MCF 10A (cell line): ENCODE measurements at regions of chr9 and their contacts with region 1.

Region 1: DNA sequence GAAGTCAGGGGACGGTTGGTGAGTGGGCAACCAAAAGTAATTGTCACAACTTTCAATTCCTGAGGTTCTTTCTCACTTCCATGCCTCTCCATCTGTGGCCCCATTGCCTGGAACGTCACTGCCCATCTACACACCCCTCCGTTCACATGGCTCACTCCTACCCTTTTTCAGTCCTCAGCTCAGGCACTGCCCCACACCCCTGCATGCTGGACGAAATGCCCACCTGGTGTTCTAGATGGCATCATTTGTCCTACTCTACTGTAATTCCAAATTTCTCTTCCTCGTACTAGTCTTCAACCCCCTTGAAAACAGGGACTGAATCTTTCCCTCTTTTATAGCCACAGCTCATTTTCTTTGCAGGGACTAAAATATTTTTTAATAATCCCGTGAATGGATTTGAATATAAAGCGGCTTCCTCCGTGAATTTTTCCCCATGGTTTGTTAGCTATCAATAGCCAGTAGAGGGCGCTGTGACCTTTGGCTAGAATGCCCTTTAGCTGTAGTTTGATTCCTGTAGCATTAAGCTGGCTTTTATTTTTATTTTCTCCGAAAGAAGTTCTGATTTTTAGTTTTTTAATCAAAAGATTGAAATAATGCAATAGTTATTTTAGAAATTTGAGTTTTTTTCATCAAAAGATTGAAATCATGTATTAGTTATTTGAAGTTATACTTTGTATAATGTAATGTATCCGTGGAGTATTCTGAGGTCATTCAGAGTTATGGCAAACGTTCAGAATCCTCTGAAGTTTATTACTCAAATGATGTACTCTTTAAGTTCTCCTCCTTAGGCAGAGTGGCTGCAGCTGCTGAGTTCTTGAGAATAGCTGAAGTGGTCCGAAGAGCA is 232.1 kb downstream of the SH3GL2 start:
- DNase-seq: peak; percentile 78
- H3K4me3 Mint-ChIP-seq: no peak overlapping the region
- H3K27ac Mint-ChIP-seq: no peak overlapping the region
- H3K4me1 Mint-ChIP-seq: no peaks in the 10 kb centered on the region
- H3K27me3 Mint-ChIP-seq: peaks cover 25% of the 10 kb centered on the region
- CTCF ChIP-seq: peak; percentile 66

Region 2: DNA sequence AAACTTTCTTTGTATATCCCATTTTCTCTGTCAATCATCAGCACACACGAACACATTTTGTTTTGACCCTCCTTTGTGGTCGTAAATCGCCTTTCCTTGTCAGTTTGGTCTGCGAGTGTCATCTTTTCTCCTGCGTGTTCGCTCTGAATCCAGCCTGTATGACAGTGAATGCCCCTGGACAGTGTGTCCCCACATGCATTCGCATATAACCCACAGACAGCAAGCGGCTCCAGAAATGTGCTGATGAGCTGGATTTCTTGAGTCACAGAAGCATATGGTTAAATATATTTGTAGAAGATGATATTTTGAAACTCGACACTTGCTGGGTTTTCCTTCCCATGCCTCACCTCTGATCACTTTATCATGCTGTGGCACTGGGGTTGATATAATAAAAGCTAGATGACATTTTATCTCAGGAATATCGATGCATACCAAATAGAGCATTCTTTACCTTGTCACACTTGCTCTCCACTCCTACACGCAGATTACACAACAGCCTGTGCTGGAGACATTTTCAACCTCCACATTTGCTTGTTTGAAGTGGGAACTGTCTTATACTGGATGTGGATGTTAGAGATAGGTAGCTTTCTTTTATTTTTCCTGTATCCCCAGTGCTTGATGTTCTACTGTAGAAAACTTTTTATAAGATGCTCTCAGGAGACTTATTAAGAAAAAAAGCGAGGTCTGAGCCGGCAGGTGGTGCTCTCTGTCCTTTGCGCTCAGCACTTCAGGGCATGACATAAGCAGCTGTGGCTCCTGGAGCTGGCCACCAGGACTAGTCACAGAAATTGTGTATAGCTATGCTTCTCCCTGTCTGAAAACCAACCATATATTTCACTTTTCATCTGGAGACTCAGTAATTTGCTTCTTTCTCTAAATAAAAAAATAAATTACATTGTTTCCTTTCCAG is 17.0 kb before region 1 on chr9:
- CTCF ChIA-PET with region 1: interaction called, 20 read pairs
- POLR2A ChIA-PET with region 1: no interaction called
- intact Hi-C with region 1: no loop called
- DNase-seq: peak; percentile 49
- H3K4me3 Mint-ChIP-seq: no peak overlapping the region
- H3K27ac Mint-ChIP-seq: no peak overlapping the region
- H3K4me1 Mint-ChIP-seq: no peaks in the 10 kb centered on the region
- H3K27me3 Mint-ChIP-seq: peaks cover 64% of the 10 kb centered on the region
- CTCF ChIP-seq: no peak

Region 3: DNA sequence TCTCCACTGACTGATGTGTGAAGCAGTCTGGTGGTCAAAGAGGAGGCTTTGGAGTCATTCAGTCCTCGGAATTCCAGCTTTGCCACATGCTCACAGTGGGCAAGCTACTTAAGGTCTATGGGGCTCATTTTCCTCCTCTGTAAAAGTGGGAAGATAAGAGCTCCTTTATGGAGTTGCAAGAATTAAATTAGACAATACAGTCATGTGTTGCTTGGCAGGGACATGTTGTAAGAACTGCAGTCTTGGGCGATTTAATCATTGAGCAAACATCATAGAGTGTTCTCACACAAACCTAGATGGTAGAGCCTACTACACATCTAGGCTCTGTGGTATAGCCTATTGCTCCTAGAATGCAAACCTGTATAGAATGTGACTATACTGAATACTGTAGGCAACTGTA is 21.9 kb after region 1 on chr9:
- CTCF ChIA-PET with region 1: interaction called, 23 read pairs
- POLR2A ChIA-PET with region 1: no interaction called
- intact Hi-C with region 1: no loop called
- DNase-seq: no peak
- H3K4me3 Mint-ChIP-seq: no peak overlapping the region
- H3K27ac Mint-ChIP-seq: no peak overlapping the region
- H3K4me1 Mint-ChIP-seq: no peaks in the 10 kb centered on the region
- H3K27me3 Mint-ChIP-seq: peaks cover 19% of the 10 kb centered on the region
- CTCF ChIP-seq: no peak

Region 4: GRCh38 chr9:17970277-17970676 is 159.3 kb after region 1 on chr9:
- CTCF ChIA-PET with region 1: no interaction called
- POLR2A ChIA-PET with region 1: no interaction called
- intact Hi-C with region 1: no loop called
- DNase-seq: no peak
- H3K4me3 Mint-ChIP-seq: no peak overlapping the region
- H3K27ac Mint-ChIP-seq: no peak overlapping the region
- H3K4me1 Mint-ChIP-seq: no peaks in the 10 kb centered on the region
- H3K27me3 Mint-ChIP-seq: peaks cover 14% of the 10 kb centered on the region
- CTCF ChIP-seq: no peak

Region 5: DNA sequence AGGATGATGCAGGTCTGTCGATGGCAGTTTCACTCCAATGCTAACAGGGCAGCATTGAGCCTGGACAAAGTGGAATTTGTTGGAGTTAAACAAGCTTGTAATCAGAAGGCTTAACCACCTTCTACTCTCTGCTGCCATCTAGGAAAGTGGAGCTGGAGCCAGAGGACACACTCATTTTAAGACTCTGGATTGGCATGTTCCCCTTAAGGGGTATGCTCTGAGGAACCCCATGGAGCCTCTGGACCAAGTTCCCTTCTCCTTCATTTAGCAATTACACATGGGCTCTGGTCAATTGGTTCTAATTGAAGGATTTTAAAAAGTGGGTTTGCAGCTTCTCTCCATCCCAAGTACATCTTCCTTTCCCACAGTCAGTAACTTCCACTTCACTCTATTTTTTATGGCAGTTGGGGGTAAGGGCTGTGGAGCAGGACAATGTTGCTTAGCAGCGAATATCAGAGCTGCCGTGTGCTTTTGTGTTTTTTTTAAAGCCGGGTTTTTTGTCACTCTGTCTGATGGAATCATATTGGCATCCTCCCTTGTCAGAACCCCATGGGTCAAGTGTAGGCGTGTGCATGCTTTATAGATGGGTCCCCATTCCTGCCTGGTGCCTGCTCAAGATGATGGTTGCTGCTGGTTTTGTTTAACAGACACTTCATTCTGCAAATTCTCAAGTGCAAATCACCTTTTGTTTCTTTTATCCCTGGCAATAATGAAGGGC is 332.2 kb after region 1 on chr9:
- CTCF ChIA-PET with region 1: interaction called, 11 read pairs
- POLR2A ChIA-PET with region 1: no interaction called
- intact Hi-C with region 1: no loop called
- DNase-seq: peak; percentile 30
- H3K4me3 Mint-ChIP-seq: no peak overlapping the region
- H3K27ac Mint-ChIP-seq: no peak overlapping the region
- H3K4me1 Mint-ChIP-seq: no peaks in the 10 kb centered on the region
- H3K27me3 Mint-ChIP-seq: peaks cover 34% of the 10 kb centered on the region
- CTCF ChIP-seq: peak; percentile 15

Region 6: GRCh38 chr9:18393340-18394130 is 582.6 kb after region 1 on chr9:
- CTCF ChIA-PET with region 1: no interaction called
- POLR2A ChIA-PET with region 1: no interaction called
- intact Hi-C with region 1: loop called (anchors 5 kb)
- DNase-seq: peak; percentile 99
- H3K4me3 Mint-ChIP-seq: peak overlapping the region; percentile 47
- H3K27ac Mint-ChIP-seq: peak overlapping the region; percentile 95
- H3K4me1 Mint-ChIP-seq: peaks cover 24% of the 10 kb centered on the region
- H3K27me3 Mint-ChIP-seq: no peaks in the 10 kb centered on the region
- CTCF ChIP-seq: no peak

Region 7: GRCh38 chr9:19028835-19029451 is 1218.0 kb after region 1 on chr9:
- CTCF ChIA-PET with region 1: interaction called, 58 read pairs
- POLR2A ChIA-PET with region 1: no interaction called
- intact Hi-C with region 1: loop called (anchors 2 kb)
- DNase-seq: peak; percentile 79
- H3K4me3 Mint-ChIP-seq: no peak overlapping the region
- H3K27ac Mint-ChIP-seq: no peak overlapping the region
- H3K4me1 Mint-ChIP-seq: peaks cover 11% of the 10 kb centered on the region
- H3K27me3 Mint-ChIP-seq: peaks cover 2% of the 10 kb centered on the region
- CTCF ChIP-seq: peak; percentile 64